ENCODE measurements at regions of chr12 and their contacts with region 1.

Region 1: GRCh38 chr12:69639400-69640016 is 28.8 kb upstream of the LRRC10 start:
- DNase-seq: peak; percentile 71
- H3K4me3 ChIP-seq: no peak overlapping the region
- H3K27ac ChIP-seq: no peak overlapping the region
- H3K4me1 ChIP-seq: no peaks in the 10 kb centered on the region
- CTCF ChIP-seq: peak; percentile 96

Region 2: GRCh38 chr12:69290545-69291277 is 348.8 kb before region 1 on chr12:
- CTCF ChIA-PET with region 1: no interaction called
- POLR2A ChIA-PET with region 1: interaction called, 4 read pairs
- intact Hi-C with region 1: loop called (anchors 1 kb)
- DNase-seq: peak; percentile 87
- H3K4me3 ChIP-seq: no peak overlapping the region
- H3K27ac ChIP-seq: no peak overlapping the region
- H3K4me1 ChIP-seq: no peaks in the 10 kb centered on the region
- CTCF ChIP-seq: peak; percentile 99

Region 3: DNA sequence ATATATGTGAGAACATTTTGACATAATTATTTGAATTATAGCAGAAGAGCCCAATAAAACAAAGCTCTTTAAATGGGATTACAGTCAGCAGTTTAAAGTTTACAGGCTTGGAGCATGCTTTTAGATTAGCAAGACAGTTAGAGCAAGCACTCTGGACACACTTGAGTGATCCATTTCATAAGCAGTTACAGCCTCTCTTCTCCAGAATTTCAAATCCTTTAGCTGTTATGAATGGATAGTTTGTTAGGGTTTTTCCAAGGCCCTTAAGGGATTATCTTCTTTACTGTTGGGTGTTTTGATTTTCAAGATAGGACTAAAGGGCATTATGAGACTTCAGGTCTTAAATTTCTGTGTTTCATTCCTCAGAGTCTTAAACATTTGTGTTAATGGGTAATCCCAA is 23.3 kb after region 1 on chr12:
- CTCF ChIA-PET with region 1: no interaction called
- POLR2A ChIA-PET with region 1: no interaction called
- intact Hi-C with region 1: no loop called
- DNase-seq: no peak
- H3K4me3 ChIP-seq: no peak overlapping the region
- H3K27ac ChIP-seq: no peak overlapping the region
- H3K4me1 ChIP-seq: no peaks in the 10 kb centered on the region
- CTCF ChIP-seq: no peak

Measured in OCI-LY7 (cell line).